Aorta (tissue), 5 donors: ENCODE measurements at regions of chr6 and their contacts with region 1.

Region 1: DNA sequence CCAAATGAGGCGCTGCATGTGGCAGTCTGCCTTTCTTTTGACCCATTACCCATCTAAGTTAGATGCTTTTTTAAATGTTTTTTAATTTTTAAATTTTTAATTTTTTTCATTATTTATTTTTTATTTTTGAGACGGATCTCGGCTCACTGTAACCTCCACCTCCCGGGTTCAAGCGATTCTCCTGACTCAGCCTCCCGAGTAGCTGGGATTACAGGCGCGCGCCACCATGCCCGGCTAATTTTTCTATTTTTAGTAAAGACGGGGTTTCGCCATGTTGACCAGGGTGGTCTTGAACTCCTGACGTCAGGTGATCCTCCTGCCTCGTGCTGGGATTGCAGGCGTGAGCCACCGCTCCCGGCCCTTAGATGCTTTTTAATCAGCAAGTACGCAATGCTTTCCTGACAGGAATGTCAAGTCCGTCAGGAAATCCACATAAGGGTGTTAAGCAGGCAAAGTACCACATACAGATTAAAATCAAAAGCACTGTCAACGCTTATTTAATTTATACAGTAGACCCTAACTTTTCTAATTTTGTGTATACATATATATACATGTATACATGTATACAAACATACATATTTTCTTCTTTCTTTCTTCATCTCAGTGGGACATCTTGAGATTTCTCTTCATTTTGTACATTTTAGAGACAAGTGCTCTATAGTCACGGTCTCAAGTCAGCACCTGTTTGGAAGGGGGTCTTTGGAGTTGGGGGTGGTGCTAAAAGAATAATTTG is 995 bp upstream of the GSTA4 start:
- DNase-seq: peak in 1 of 2 donors; percentile 57
- ATAC-seq: no peak
- H3K4me3 ChIP-seq: no peak overlapping the region
- H3K27ac ChIP-seq: peak overlapping the region in 1 of 2 donors; percentile 45
- H3K4me1 ChIP-seq: no peaks in the 10 kb centered on the region
- H3K27me3 ChIP-seq: no peaks in the 10 kb centered on the region

Region 2: DNA sequence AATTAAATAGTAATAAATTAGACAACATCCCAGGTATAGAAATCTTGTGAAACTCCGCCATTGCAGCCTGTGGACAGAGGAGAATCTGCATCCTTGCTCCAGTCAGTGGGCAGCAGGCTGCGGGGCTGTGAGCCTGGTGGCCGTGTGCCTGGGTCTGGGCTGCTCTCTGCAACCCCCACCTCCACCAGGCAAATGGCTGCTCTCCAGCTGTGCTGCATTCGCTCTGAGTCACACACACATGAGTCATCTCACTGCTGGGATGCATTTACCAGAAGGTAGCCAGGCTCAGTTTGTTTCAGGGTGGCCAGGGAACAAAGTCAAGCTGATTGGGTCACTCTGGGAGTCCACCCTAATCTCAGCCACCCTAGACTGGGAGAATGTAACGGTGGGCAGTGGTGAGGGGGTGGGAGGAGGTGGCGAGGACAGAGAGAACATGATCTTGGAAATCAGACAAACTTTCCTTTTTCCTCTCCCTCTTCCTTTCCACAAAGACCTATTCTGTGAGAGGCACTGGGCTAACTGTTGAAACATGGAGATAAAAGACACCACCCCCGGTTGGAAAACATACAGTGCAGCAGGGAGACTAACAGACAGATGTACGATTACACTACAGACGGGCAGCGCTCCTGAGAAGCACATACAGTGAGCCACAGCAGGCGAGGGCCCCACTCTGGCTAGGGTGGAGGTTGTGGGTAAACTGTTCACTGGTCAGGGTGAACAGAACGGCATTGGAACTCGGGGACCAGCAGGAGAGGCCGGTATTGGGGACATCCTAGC is 478.4 kb before region 1 on chr6:
- intact Hi-C with region 1: loop called in 1 of 2 experiments (anchors 10 kb)
- DNase-seq: peak; percentile 91 to 94
- ATAC-seq: peak; percentile 92
- H3K4me3 ChIP-seq: no peak overlapping the region
- H3K27ac ChIP-seq: peak overlapping the region; percentile 62 to 90
- H3K4me1 ChIP-seq: peaks cover 3 to 8% of the 10 kb centered on the region in 2 donors
- H3K27me3 ChIP-seq: no peaks in the 10 kb centered on the region

Region 3: GRCh38 chr6:52790861-52791260 is 205.2 kb before region 1 on chr6:
- intact Hi-C with region 1: no loop called
- DNase-seq: no peak
- ATAC-seq: no peak
- H3K4me3 ChIP-seq: no peak overlapping the region
- H3K27ac ChIP-seq: no peak overlapping the region
- H3K4me1 ChIP-seq: no peaks in the 10 kb centered on the region
- H3K27me3 ChIP-seq: no peaks in the 10 kb centered on the region

Region 4: GRCh38 chr6:52881996-52882841 is 113.9 kb before region 1 on chr6:
- intact Hi-C with region 1: loop called (anchors 5 kb)
- DNase-seq: peak; percentile 65 to 81
- ATAC-seq: peak; percentile 95
- H3K4me3 ChIP-seq: peak overlapping the region; percentile 43 to 53
- H3K27ac ChIP-seq: peak overlapping the region in 1 of 2 donors; percentile 35
- H3K4me1 ChIP-seq: no peaks in the 10 kb centered on the region
- H3K27me3 ChIP-seq: no peaks in the 10 kb centered on the region

Region 5: GRCh38 chr6:52925919-52926770 is 69.9 kb before region 1 on chr6:
- intact Hi-C with region 1: no loop called
- DNase-seq: no peak
- ATAC-seq: no peak
- H3K4me3 ChIP-seq: no peak overlapping the region
- H3K27ac ChIP-seq: no peak overlapping the region
- H3K4me1 ChIP-seq: no peaks in the 10 kb centered on the region
- H3K27me3 ChIP-seq: no peaks in the 10 kb centered on the region

Region 6: GRCh38 chr6:53042112-53042511 is 46.0 kb after region 1 on chr6:
- intact Hi-C with region 1: loop called in 1 of 2 experiments (anchors 2 kb)
- DNase-seq: no peak
- ATAC-seq: peak; percentile 69
- H3K4me3 ChIP-seq: no peak overlapping the region
- H3K27ac ChIP-seq: no peak overlapping the region
- H3K4me1 ChIP-seq: peaks cover 5 to 11% of the 10 kb centered on the region in 2 donors
- H3K27me3 ChIP-seq: no peaks in the 10 kb centered on the region

Region 7: DNA sequence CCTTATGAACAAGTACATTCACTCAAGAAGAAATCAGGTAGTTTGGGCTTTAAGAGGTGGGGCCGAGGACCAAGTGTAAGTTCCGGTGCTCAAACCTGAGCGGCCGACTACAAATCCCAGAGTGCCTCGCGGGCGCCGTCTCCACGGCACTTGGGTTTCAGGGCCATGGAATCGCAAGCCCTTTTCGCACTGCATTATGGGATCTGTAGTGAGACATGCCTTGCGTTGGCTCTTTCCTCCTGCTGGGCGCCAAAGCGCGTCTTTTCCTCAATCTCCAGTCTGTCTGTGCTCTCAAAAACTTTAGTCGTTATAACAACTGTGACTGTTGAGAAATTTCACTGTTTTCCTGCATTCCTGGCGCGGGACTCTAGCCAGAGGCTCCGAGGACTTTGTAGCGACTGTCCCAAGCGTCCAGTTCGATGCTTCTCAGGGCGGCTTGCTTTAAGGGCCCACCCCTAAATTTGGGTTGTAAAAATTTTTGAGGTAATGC is 68.7 kb after region 1 on chr6:
- intact Hi-C with region 1: loop called in 1 of 2 experiments (anchors 1 kb)
- DNase-seq: peak; percentile 97 to 99
- ATAC-seq: peak; percentile 95
- H3K4me3 ChIP-seq: peak overlapping the region; percentile 82 to 90
- H3K27ac ChIP-seq: peak overlapping the region; percentile 15 to 79
- H3K4me1 ChIP-seq: peaks cover 0 to 5% of the 10 kb centered on the region in 2 donors
- H3K27me3 ChIP-seq: no peaks in the 10 kb centered on the region